Activated B cell treated with CpG ODN at 0.5 μM for 24 hours (primary cell): ENCODE measurements at regions of chr19 and their contacts with region 1.

Region 1: DNA sequence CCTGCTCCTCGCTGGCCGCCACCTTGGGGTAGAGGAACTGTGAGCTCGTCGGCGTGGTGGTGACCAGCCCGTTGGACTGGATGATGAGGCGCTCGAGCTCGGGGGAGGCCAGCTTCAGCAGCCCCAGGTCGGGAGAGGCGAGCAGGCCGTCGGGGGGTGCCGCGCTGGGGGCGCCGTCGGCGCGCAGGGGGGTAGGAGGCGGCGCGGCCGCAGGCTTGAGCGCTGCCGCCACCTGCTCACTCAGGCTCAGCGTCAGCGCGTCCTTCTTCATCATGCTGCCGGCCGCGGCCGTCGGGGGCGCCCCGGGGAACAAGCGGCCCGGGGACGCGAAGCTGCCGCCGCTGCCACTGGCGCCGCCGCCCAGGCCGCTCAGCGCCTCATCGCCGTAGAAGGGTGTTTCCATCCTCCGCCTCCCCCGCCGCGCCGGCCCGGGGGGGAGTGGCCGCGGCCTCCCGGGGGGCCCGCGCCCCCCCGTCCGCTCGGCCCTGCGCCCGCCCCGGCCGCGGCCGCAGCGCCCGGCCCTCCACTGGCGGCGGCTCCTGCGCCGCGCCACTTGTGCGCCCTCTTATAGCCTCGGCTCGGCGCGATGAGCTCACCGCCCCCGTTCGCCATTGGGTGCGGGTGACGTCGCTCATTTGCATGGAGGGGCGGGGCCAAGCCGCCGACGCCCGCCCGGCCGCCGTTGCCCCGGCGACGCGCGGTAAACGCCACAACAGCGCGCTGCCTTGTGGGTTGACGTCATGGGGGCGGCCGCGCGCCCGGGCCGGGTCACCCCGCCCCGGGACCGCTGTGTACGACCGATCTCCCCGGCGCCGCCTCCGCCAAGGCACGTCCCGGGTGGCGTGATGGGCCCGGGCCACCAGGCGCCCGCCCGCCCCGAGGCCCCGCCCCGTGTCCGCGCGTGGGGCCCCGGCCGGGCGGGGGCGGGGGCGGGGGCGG is at the start of gene JUND:
- DNase-seq: peak; percentile 99
- ATAC-seq: peak; percentile 63
- H3K4me3 Mint-ChIP-seq: peak within 1 kb of the TSS; percentile 96
- H3K27ac Mint-ChIP-seq: peak within 1 kb of the TSS; percentile 97
- H3K4me1 Mint-ChIP-seq: peaks cover 48% of the 10 kb centered on the region
- H3K27me3 Mint-ChIP-seq: no peaks in the 10 kb centered on the region
- CTCF ChIP-seq: no peak
- total RNA-seq, gene JUND: 206 and 225 TPM in 2 replicates

Region 2: DNA sequence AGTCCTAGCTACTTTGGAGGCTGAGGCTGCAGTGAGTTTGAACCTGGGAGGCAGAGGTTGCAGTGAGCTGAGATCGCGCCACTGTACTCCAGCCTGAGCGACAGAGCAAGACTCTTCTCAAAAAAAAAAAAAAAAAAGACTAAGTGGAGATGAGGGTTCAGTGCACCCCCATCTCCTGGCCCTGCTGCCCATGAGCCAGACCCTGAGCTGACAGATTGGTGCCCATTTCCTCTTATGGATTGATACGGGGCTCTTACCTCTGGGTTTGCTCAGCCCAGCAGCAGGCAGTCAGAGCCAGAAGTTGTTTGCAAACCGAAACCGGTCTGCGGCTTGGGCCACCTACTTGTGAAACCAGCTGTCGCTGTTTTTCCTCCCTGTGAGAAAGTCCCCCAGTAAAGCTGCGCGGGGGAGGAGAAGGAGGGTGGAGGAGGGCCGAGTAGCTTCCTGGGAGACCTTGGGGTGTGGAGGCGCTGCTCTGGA is 236.5 kb before region 1 on chr19:
- CTCF ChIA-PET with region 1: no interaction called
- POLR2A ChIA-PET with region 1: interaction called, 23 read pairs
- intact Hi-C with region 1: no loop called
- DNase-seq: peak; percentile 72
- ATAC-seq: peak; percentile 92
- H3K4me3 Mint-ChIP-seq: peak overlapping the region; percentile 78
- H3K27ac Mint-ChIP-seq: peak overlapping the region; percentile 96
- H3K4me1 Mint-ChIP-seq: peaks cover 55% of the 10 kb centered on the region
- H3K27me3 Mint-ChIP-seq: no peaks in the 10 kb centered on the region
- CTCF ChIP-seq: no peak

Region 3: DNA sequence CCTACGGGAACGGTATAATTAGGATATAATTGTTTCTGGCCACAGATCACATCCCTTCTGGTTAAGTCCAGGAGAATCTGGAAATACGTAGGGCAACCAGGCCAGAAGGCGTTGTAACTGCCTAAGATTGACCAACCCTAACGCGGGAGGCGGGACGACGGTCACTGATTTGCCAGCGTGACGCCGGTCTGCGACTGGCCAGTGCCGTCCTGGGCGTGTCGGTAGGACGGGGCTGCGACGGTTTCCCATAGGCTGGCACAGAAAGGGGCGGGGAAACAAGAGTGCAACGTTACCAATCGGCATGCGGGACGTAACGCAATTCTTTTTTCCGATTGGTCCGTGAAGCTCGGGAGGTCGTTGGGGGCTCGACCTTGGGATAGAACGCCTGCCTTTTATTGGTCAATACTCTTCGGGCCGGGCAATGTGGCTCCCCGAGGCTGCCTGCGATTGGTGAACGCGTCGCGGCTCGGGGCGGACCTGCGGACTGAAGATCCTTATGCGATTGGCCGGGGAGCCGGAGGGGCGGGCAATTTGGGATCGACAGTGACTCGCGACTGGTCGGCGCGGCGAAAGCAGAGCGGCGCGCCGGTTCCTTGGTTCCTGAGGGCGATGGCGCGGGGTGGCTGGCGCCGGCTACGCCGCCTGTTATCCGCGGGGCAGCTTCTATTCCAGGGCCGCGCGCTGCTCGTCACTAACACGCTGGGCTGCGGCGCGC is 88.5 kb before region 1 on chr19 and contains the start of gene MPV17L2:
- CTCF ChIA-PET with region 1: interaction called, 9 read pairs
- POLR2A ChIA-PET with region 1: interaction called, 62 read pairs
- intact Hi-C with region 1: no loop called
- DNase-seq: peak; percentile 90
- ATAC-seq: peak; percentile 83
- H3K4me3 Mint-ChIP-seq: peak within 1 kb of the TSS; percentile 87
- H3K27ac Mint-ChIP-seq: peak within 1 kb of the TSS; percentile 95
- H3K4me1 Mint-ChIP-seq: peaks cover 40% of the 10 kb centered on the region
- H3K27me3 Mint-ChIP-seq: no peaks in the 10 kb centered on the region
- CTCF ChIP-seq: no peak
- total RNA-seq, gene MPV17L2: 17.3 and 17.9 TPM in 2 replicates

Region 4: GRCh38 chr19:18251587-18252369 is 29.6 kb before region 1 on chr19:
- CTCF ChIA-PET with region 1: interaction called, 30 read pairs
- POLR2A ChIA-PET with region 1: interaction called, 42 read pairs
- intact Hi-C with region 1: no loop called
- DNase-seq: peak; percentile 75
- ATAC-seq: peak; percentile 68
- H3K4me3 Mint-ChIP-seq: no peak overlapping the region
- H3K27ac Mint-ChIP-seq: peak overlapping the region; percentile 47
- H3K4me1 Mint-ChIP-seq: peaks cover 33% of the 10 kb centered on the region
- H3K27me3 Mint-ChIP-seq: peaks cover 2% of the 10 kb centered on the region
- CTCF ChIP-seq: peak; percentile 69

Region 5: DNA sequence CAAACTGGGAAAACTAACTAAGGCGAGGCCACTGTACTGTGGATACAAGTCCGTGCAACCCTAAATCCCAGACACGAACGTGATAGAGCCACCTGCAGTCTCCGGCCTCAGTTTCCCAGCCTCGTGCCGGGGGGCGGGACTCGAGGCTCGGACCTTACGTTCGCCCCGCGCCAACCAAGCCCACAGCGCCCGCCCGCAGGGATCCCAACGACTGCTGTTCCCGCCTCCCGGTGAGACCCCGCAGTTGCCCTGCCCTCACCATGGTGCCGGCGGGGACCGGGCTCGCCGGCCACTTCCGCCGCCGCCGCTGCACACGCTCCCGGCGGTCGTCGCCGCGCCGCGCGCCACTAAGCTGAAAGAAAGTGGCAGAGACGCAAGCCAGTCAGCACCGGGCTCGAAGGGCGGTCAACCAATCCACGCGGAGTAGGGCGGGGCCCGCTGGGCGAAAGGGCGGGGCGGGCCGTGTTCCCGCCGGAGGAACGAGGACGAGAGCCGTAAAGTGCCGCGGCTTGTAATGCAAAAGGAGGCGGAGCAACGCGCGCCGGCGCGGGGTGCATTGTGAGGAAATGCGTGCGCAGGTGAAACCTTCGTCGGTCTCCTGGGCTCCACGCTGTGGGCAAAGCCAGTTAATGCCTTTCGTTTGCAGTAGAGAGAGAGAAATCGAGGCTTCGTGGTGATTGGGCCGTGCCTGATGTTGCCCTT is 41.6 kb after region 1 on chr19 and contains the start of gene LSM4:
- CTCF ChIA-PET with region 1: interaction called, 238 read pairs
- POLR2A ChIA-PET with region 1: interaction called, 857 read pairs
- intact Hi-C with region 1: loop called (anchors 1 kb)
- DNase-seq: peak; percentile 98
- ATAC-seq: peak; percentile 94
- H3K4me3 Mint-ChIP-seq: peak within 1 kb of the TSS; percentile 85
- H3K27ac Mint-ChIP-seq: peak within 1 kb of the TSS; percentile 91
- H3K4me1 Mint-ChIP-seq: peaks cover 46% of the 10 kb centered on the region
- H3K27me3 Mint-ChIP-seq: no peaks in the 10 kb centered on the region
- CTCF ChIP-seq: no peak
- total RNA-seq, gene LSM4: 59.2 and 70.3 TPM in 2 replicates

Region 6: DNA sequence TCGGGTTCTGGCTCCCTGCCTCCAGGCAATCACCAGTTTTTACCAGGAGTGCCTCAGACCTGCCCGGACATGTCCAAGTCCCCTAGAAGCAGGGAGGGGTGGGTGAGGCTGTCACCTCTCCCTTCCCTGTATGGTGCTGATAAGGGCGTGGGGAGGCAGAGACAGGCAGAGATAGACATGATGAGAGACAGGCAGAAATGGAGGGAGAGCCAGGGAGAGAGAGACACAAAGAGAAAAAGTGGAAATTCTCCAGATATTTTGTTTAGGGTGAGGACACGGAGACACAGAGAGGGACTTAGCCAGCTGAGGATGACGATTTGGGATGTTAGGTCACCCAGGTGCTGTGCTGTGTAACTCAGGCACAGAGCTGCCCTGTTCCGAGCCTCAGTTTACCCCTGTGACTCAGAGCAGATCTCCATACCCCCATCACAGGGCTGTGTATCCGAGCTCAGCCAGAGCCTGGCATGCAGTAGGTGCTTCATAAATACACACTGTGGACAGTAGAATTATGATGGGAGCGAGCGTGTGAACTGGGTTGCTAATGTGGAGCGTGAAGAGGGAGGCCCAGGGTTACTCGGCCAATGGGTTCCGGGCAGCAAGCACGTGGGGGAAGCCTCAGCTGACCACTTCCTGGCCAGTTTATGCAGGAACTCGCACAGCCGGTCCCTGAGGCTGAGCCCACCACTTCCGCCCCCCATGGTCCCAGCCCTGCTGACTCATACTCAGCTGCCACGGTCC is 92.7 kb after region 1 on chr19:
- CTCF ChIA-PET with region 1: no interaction called
- POLR2A ChIA-PET with region 1: interaction called, 19 read pairs
- intact Hi-C with region 1: no loop called
- DNase-seq: peak; percentile 50
- ATAC-seq: peak; percentile 86
- H3K4me3 Mint-ChIP-seq: peak overlapping the region; percentile 7
- H3K27ac Mint-ChIP-seq: peak overlapping the region; percentile 41
- H3K4me1 Mint-ChIP-seq: peaks cover 25% of the 10 kb centered on the region
- H3K27me3 Mint-ChIP-seq: no peaks in the 10 kb centered on the region
- CTCF ChIP-seq: no peak

Region 7: GRCh38 chr19:18521885-18522624 is 240.7 kb after region 1 on chr19 and contains the start of gene ELL:
- CTCF ChIA-PET with region 1: no interaction called
- POLR2A ChIA-PET with region 1: interaction called, 7 read pairs
- intact Hi-C with region 1: loop called (anchors 2 kb)
- DNase-seq: peak; percentile 100
- ATAC-seq: peak; percentile 89
- H3K4me3 Mint-ChIP-seq: peak within 1 kb of the TSS; percentile 98
- H3K27ac Mint-ChIP-seq: peak within 1 kb of the TSS; percentile 96
- H3K4me1 Mint-ChIP-seq: peaks cover 24% of the 10 kb centered on the region
- H3K27me3 Mint-ChIP-seq: no peaks in the 10 kb centered on the region
- CTCF ChIP-seq: no peak
- total RNA-seq, gene ELL: 29.0 and 32.6 TPM in 2 replicates